ENCODE measurements at regions of chr12 and their contacts with region 1.

Region 1: GRCh38 chr12:62900686-62901272 is 34.2 kb downstream of the PPM1H start:
- DNase-seq: no peak

Region 2: DNA sequence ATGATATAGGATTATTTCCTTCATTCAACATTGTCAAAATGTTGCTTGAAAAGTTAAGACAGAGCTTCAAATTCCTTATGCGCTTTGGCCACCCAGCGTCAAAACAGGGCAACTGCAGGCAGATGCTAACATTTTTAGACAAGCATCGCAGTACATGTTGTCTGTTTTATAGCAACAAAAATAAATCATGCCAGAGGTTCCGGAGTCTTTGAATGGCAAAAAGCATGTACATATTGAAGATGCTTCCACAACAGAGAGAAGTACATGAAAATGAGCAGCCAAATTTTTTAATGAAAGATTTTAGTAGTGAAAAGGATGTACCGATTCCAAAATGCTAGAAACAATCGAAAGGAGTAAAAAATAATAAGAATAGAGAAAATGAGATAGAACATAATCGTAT is 690.4 kb before region 1 on chr12:
- intact Hi-C with region 1: no loop called
- DNase-seq: no peak

Region 3: GRCh38 chr12:63103494-63104131 is 202.8 kb after region 1 on chr12:
- intact Hi-C with region 1: no loop called
- DNase-seq: no peak

Region 4: GRCh38 chr12:64864319-64864718 is 1963.5 kb after region 1 on chr12:
- intact Hi-C with region 1: loop called in 1 of 2 experiments (anchors 10 kb)
- DNase-seq: no peak